ENCODE measurements at regions of chr9 and their contacts with region 1.

Region 1: DNA sequence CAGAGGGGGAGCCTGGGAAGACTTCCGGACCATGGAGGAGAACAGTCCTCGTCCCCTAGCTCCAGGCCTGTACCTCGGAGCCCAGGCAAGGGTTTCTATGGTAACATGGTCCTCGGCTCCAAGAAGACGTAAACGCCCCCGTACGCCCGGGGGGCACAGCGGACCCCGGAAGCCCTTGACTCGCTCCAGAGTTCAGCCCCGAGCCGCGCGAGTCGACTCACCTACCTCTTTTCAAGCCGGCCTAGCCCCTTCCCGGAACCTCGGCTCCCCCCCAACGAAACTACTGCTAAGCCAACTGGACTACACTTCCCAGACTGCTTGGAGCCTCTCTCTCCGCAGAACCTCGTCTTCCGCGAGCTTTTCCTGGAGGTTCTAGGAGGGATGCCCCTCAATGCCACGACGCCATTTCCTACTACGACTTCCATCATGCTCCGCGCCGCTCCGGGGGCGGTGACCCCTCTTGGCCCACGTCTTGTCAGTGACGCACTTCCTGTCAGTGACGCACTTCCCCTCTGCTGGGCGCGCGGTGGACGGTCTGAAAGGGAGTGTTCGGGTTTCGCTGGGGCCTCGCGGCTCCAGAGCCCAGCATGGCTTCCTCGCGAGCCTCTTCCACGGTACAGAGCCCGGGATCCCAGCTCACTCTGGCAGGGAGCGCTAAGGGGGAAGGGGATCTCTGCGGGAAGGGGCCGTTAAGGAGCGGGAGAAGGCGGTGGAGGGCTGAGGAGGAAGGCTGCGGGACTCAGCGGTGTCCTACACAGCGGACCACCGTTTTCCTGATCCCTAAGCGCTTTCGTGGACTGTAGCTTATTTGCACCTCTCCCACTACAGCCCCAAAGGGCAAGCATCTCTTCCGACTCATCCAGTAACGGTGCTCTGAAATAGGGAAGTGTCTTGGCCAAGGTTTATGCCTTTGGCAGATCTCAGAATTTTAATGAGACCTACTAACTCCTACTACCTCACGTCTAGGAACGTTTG is at the starts of genes CDC26 and PRPF4:
- DNase-seq: peak; percentile 96
- H3K4me3 Mint-ChIP-seq: no peak within 1 kb of the TSS
- H3K27ac Mint-ChIP-seq: no peak within 1 kb of the TSS
- H3K4me1 Mint-ChIP-seq: peaks cover 39% of the 10 kb centered on the region
- H3K27me3 Mint-ChIP-seq: no peaks in the 10 kb centered on the region
- total RNA-seq, gene CDC26: 34.3 to 38.5 TPM
- total RNA-seq, gene PRPF4: 27.7 to 28.2 TPM

Region 2: DNA sequence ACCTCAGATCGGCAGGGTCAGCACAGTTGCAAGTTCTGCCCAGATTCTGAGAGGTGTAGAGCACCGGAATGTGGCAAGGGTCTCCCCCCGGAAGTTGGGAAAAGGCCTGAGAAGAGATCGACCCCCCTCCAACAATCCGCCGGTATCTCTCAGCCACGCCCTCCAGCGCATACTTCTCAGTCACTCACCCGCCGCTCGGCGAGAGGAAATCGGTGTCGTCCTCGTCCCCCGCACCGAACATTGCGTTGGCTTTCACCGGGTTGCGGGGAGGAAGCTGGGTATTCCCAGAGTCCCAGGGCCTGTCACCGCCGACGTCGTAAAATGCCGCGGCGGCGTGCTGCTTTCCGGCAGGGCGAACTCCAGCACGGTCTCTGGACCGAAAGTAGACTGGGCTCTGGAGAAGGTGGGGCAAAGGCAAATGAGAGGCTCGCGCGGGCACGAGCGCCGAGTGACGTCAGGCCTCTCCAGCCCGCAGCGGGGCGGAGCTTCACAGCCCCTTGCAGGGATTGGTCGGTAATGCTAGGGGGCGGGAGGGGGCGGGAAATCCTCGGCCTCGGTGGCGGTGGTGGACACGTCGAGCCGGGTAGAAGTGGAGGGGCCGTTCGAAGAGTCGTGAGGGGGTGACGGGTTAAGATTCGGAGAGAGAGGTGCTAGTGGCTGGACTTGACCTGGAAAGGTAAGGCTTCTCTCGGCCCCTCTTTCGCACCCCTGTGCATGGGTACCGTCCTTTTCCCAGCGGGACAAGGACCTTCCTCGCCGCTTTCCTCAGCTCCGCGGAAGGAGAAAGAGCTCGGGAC is 54.2 kb before region 1 on chr9 and contains the starts of genes FKBP15 and SLC31A1:
- CTCF ChIA-PET with region 1: interaction called, 31 read pairs
- POLR2A ChIA-PET with region 1: interaction called, 47 read pairs
- DNase-seq: peak; percentile 97
- H3K4me3 Mint-ChIP-seq: peak within 1 kb of the TSS; percentile 92
- H3K27ac Mint-ChIP-seq: peak within 1 kb of the TSS; percentile 85
- H3K4me1 Mint-ChIP-seq: peaks cover 46% of the 10 kb centered on the region
- H3K27me3 Mint-ChIP-seq: no peaks in the 10 kb centered on the region
- total RNA-seq, gene FKBP15: 34.9 to 38.2 TPM
- total RNA-seq, gene SLC31A1: 9.2 to 10.0 TPM

Region 3: DNA sequence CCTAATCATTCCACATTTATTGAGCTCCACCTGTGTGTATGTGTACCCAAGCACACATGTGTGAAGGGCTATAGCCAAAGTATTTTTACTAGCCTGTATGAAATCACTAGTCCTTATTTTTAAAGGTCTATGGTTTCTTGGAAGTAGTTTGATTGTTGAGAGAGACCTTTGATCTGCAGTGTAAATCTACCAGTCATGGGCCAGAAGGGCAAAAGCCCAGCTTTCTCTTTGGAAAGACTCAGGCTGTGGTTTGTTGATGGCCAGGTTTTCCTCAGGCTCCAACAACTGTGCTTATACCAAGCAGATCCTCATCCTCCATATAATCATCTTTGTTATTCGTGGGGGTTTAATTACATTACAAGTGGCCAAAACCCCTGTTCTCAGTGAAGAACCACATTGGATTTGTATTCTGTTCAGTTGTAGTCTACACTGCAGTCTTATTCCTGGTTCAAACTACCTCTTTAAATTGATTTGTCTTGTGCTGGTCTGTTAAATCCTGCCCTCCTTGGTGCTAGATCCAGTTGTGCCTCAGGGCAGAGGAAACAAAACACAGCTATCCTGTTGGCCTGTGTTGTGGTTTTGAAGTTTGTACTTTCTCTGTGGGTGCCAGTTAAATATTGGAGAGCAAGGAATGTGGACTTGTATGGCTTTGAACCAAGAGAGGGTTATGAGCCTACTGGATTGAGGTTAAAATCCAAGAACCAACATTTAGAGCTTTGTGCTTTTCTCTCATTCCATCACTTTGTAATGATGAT is 13.3 kb before region 1 on chr9:
- CTCF ChIA-PET with region 1: interaction called, 13 read pairs
- POLR2A ChIA-PET with region 1: interaction called, 3 read pairs
- DNase-seq: no peak
- H3K4me3 Mint-ChIP-seq: no peak overlapping the region
- H3K27ac Mint-ChIP-seq: no peak overlapping the region
- H3K4me1 Mint-ChIP-seq: peaks cover 3% of the 10 kb centered on the region
- H3K27me3 Mint-ChIP-seq: no peaks in the 10 kb centered on the region

Region 4: GRCh38 chr9:113349445-113350094 is 74.1 kb after region 1 on chr9 and contains the start of gene BSPRY:
- CTCF ChIA-PET with region 1: interaction called, 21 read pairs
- POLR2A ChIA-PET with region 1: interaction called, 19 read pairs
- DNase-seq: peak; percentile 53
- H3K4me3 Mint-ChIP-seq: peak within 1 kb of the TSS; percentile 82
- H3K27ac Mint-ChIP-seq: peak within 1 kb of the TSS; percentile 63
- H3K4me1 Mint-ChIP-seq: peaks cover 52% of the 10 kb centered on the region
- H3K27me3 Mint-ChIP-seq: peaks cover 11% of the 10 kb centered on the region
- total RNA-seq, gene BSPRY: 7.1 to 7.3 TPM

Region 5: GRCh38 chr9:113401027-113401792 is 125.8 kb after region 1 on chr9 and contains the start of gene ALAD:
- CTCF ChIA-PET with region 1: interaction called, 64 read pairs
- POLR2A ChIA-PET with region 1: interaction called, 7 read pairs
- DNase-seq: peak; percentile 99
- H3K4me3 Mint-ChIP-seq: peak within 1 kb of the TSS; percentile 92
- H3K27ac Mint-ChIP-seq: peak within 1 kb of the TSS; percentile 78
- H3K4me1 Mint-ChIP-seq: peaks cover 23% of the 10 kb centered on the region
- H3K27me3 Mint-ChIP-seq: no peaks in the 10 kb centered on the region
- total RNA-seq, gene ALAD: 25.1 to 29.0 TPM

Region 6: DNA sequence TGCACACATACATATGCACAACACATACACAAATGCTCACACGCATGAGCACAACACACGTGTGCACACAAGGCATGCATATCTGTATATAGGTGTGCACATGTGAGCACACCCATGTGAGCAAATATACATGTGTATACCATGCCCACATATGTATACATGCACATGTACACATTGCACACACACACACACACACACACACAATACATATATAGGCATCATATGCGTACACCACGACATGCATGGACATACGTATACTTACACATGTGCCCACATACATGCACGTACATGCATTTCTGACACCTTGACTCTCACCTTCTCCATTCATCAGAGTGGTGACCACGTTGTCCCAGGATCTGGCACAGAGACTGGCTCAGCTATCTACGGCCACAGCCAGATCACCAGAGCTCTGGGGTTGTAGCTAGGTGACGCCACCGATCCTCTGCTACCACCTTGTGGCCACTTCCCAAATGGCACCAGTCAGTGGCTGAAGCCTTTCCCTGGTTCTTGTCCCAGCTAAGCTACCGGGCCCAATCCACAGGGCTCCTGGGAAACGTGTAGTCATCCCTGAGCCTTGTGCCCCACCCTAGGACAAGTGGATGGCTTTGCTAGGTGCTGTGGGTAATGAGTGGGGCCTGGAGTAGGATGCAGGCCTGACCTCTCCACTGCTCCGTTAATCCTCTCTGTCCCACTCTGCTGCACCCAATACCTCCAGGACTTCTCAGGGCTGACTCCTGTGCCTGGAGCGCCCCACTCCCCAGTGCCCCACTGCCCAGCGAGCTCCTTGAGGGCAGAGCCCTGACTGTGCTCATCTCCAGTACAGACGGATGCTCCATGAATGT is 382.5 kb after region 1 on chr9:
- CTCF ChIA-PET with region 1: interaction called, 80 read pairs
- POLR2A ChIA-PET with region 1: interaction called, 5 read pairs
- DNase-seq: peak; percentile 81
- H3K4me3 Mint-ChIP-seq: no peak overlapping the region
- H3K27ac Mint-ChIP-seq: no peak overlapping the region
- H3K4me1 Mint-ChIP-seq: peaks cover 7% of the 10 kb centered on the region
- H3K27me3 Mint-ChIP-seq: peaks cover 34% of the 10 kb centered on the region

Measured in activated CD4-positive, alpha-beta memory T cell treated with anti-CD3 and anti-CD28 coated beads, Interleukin-2, amount 10 ng/mL, durations not matched to agents 7 days and 5 days (primary cell).